ENCODE measurements at regions of chr2 and their contacts with region 1.

Region 1: DNA sequence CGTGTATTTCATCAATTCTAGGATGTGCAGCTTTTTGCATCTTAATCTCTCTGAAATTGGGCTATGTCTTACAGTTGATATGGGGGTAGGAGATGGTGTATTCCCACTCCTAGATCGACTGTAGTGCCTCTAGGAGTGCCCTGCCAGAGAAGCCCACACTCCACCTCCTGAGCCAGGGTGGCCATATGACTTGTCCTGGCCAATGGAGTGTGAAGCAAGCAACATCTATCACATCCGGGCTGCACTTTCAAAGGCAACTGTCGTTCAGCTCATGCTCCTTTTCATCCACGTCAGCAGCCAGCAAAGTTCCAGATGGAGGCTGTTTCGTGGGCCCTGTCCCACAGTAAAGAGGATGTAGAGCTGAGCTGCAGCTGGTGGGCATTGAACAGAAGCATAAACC is 149.4 kb upstream of the SLC1A4 start:
- DNase-seq: peak; percentile 35
- ATAC-seq: peak; percentile 30
- H3K4me3 ChIP-seq: no peak overlapping the region
- H3K27ac ChIP-seq: peak overlapping the region; percentile 91
- H3K4me1 ChIP-seq: peaks cover 62 to 75% of the 10 kb centered on the region in 2 experiments
- H3K27me3 ChIP-seq: no peaks in the 10 kb centered on the region
- CTCF ChIP-seq: no peak
- POLR2A ChIP-seq: peak; percentile 44
- RAD21 ChIP-seq: no peak

Region 2: DNA sequence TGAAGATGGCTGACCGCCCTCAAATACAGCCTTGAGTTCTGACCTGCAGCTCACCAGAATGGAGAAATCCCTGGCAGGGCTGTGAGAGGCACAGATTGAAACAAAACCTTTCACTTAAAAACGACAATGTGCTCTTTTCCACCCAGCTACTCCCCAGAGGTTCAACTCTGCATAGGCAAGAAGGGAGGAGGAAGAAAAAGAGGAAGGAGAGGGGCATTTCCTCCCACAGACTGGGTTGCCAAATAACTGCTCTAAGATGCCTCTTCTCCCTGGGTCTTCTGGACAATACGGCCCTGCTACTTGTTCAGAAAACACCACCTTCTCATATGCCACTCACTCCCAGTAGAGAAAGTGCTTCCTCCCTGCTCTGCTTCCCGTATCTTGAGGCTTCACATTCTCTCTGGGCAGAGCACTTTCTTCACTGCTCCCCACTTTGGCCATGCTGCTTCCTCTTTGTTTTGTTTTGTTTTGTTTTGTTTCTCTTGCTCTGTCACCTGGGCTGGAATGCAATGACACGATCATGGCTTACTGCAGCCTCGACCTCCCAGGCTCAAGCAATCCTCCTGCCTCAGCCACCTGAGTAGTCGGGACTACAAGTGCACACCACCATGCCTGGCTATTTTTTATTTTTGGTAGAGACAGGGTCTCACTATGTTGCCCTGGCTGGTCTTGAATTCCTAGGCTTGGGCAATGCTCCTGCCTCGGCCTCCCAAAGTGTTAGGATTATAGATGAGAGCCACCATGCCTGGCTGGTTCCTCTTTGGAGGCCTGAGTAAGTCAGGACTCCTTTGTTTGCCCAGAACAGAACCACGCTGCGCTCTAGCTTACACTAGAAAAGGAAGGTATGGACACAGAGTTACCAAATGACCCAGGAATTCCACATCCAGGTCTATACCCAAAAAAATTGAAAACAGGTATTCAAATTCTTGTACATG is 13.2 kb after region 1 on chr2:
- CTCF ChIA-PET with region 1: no interaction called
- POLR2A ChIA-PET with region 1: interaction called, 47 read pairs
- RAD21 ChIA-PET with region 1: interaction called in 1 of 2 experiments, 3 read pairs
- intact Hi-C with region 1: loop called (anchors 2 kb)
- DNase-seq: no peak
- ATAC-seq: no peak
- H3K4me3 ChIP-seq: no peak overlapping the region
- H3K27ac ChIP-seq: no peak overlapping the region
- H3K4me1 ChIP-seq: peaks cover 14 to 48% of the 10 kb centered on the region in 2 experiments
- H3K27me3 ChIP-seq: no peaks in the 10 kb centered on the region
- CTCF ChIP-seq: no peak
- POLR2A ChIP-seq: no peak
- RAD21 ChIP-seq: no peak

Region 3: DNA sequence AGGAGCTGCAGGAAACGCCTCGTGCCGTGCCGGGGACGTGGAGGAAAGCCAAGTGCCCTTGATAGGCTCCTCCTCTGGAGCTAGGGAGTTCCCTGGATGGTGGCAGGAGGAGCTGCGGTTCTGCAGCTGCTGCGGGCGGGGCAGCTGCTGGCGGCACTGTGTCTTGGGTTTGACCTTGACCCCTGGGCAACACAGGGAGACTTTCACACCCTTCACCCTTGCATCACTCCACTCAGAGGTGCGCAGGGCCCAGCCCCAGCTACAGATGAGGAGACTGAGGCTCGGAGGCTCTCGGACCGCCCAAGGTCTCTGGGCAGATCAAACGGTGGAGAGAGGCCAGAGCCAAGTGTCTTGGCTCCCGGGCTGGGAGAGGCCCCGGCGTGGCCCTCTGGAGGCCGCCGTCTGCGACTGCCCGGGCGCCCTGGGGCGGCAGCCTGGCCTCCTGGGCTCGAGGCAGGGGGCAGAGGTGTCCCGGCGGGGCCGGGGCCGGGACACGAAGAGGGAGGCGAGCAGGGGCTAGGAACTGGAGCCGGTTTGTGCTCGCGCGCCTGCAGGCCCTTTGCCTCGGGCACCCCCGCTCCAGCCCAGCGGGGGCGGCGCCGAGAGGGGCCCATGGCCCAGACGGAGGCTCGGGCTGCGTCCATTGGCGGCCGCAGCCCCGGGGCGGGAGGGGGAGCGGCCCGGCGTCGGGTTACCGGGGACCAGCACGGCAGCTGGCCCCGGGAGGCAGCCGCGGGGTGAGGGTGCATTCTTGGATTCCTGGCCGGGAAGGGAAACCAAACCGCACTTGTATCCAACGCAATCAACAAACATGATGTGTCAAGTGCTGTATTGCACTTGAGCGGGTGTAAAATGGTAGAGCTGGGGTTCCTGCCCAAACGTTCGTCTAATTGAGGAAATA is 19.7 kb after region 1 on chr2:
- CTCF ChIA-PET with region 1: interaction called, 4 read pairs
- POLR2A ChIA-PET with region 1: interaction called, 47 read pairs
- RAD21 ChIA-PET with region 1: interaction called, 6 to 7 read pairs
- intact Hi-C with region 1: loop called (anchors 2 kb)
- DNase-seq: peak; percentile 63
- ATAC-seq: peak; percentile 83
- H3K4me3 ChIP-seq: peak overlapping the region; percentile 34 to 47
- H3K27ac ChIP-seq: peak overlapping the region; percentile 97
- H3K4me1 ChIP-seq: peaks cover 42 to 83% of the 10 kb centered on the region in 2 experiments
- H3K27me3 ChIP-seq: no peaks in the 10 kb centered on the region
- CTCF ChIP-seq: peak in 1 of 3 experiments; percentile 19; a peak in 1 of 6 replicates
- POLR2A ChIP-seq: peak; percentile 46
- RAD21 ChIP-seq: no peak

Region 4: GRCh38 chr2:64988420-64989125 is 148.7 kb after region 1 on chr2:
- CTCF ChIA-PET with region 1: no interaction called
- POLR2A ChIA-PET with region 1: no interaction called
- RAD21 ChIA-PET with region 1: no interaction called
- intact Hi-C with region 1: no loop called
- DNase-seq: peak; percentile 19
- ATAC-seq: peak; percentile 84
- H3K4me3 ChIP-seq: peak overlapping the region; percentile 39 to 67
- H3K27ac ChIP-seq: peak overlapping the region; percentile 24; the same call in 1 of the 2 replicates
- H3K4me1 ChIP-seq: peaks cover 0 to 18% of the 10 kb centered on the region in 2 experiments; a peak in 2 of 4 replicates
- H3K27me3 ChIP-seq: peaks cover 3% of the 10 kb centered on the region; the same call in 1 of the 2 replicates
- CTCF ChIP-seq: peak; percentile 8 to 42 (median 23); a peak in 4 of 6 replicates
- POLR2A ChIP-seq: no peak
- RAD21 ChIP-seq: no peak

Region 5: GRCh38 chr2:65396348-65397026 is 556.6 kb after region 1 on chr2:
- CTCF ChIA-PET with region 1: no interaction called
- POLR2A ChIA-PET with region 1: no interaction called
- RAD21 ChIA-PET with region 1: no interaction called
- intact Hi-C with region 1: no loop called
- DNase-seq: no peak
- ATAC-seq: no peak
- H3K4me3 ChIP-seq: no peak overlapping the region
- H3K27ac ChIP-seq: peak overlapping the region; percentile 7; the same call in 1 of the 2 replicates
- H3K4me1 ChIP-seq: peaks cover 17 to 27% of the 10 kb centered on the region in 2 experiments
- H3K27me3 ChIP-seq: no peaks in the 10 kb centered on the region
- CTCF ChIP-seq: no peak
- POLR2A ChIP-seq: no peak
- RAD21 ChIP-seq: no peak